AG04449 (cell line): ENCODE measurements at regions of chr18 and their contacts with region 1.

Region 1: DNA sequence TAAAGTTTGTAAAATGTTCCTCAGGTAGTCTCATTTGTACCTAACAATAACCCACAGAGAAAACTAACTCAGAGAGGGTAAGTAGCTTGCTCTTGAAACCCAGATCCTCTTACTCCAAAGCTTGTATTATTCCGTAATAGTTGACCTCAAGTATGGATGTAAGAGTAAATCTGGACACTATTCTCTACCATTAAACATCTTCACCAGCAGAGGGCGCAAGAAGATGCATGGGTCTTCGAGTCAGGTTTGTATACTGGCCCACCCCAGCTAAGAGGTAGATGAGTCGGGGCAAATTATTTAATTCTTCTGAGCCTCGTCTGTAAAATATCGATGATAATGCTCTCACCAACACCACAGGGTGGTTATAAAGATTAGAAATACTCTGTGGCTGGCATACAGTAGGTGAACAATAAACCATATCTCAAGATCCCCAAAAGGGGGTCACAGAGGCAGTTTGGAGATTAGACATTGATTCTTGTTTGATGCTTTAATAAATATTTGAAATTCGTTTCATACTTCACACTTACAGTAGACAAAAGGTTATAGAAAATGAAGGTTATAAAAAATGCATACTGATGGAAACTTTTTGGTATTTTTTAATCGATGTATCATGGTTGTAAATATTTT is 3.5 kb upstream of the CABLES1 start:
- DNase-seq: peak; percentile 37
- H3K4me3 ChIP-seq: no peak overlapping the region
- CTCF ChIP-seq: peak; percentile 67

Region 2: GRCh38 chr18:23032030-23032582 is 99.7 kb before region 1 on chr18:
- CTCF ChIA-PET with region 1: interaction called, 57 read pairs
- POLR2A ChIA-PET with region 1: interaction called, 3 read pairs
- DNase-seq: peak; percentile 65
- H3K4me3 ChIP-seq: no peak overlapping the region
- CTCF ChIP-seq: no peak

Region 3: GRCh38 chr18:23115683-23116096 is 16.1 kb before region 1 on chr18:
- CTCF ChIA-PET with region 1: interaction called, 61 read pairs
- POLR2A ChIA-PET with region 1: no interaction called
- DNase-seq: peak; percentile 89
- H3K4me3 ChIP-seq: no peak overlapping the region
- CTCF ChIP-seq: no peak

Region 4: DNA sequence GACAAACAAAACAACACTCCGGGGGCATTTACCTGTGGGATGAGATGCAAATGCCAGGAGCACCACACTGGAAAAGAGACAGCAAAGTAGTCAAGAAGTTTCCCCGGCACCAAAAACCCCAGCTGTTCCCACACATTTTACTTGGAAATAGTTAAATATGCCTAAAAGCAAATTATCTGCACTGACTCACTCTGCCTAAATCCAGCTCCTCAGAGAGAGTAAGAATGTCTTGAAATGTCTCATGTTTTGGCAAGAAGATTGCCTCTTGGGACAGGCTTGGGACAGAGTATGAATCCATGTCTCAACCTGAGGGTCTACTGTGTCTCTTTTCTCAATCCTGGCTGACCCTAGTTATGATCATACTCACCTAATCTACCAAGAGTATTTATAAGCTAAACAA is 233.8 kb after region 1 on chr18:
- CTCF ChIA-PET with region 1: interaction called, 12 read pairs
- POLR2A ChIA-PET with region 1: no interaction called
- DNase-seq: no peak
- H3K4me3 ChIP-seq: no peak overlapping the region
- CTCF ChIP-seq: no peak

Region 5: GRCh38 chr18:23401400-23402347 is 269.9 kb after region 1 on chr18:
- CTCF ChIA-PET with region 1: interaction called, 21 read pairs
- POLR2A ChIA-PET with region 1: no interaction called
- DNase-seq: no peak
- H3K4me3 ChIP-seq: no peak overlapping the region
- CTCF ChIP-seq: no peak

Region 6: GRCh38 chr18:24246143-24246542 is 1114.3 kb after region 1 on chr18:
- CTCF ChIA-PET with region 1: no interaction called
- POLR2A ChIA-PET with region 1: no interaction called
- DNase-seq: no peak
- H3K4me3 ChIP-seq: no peak overlapping the region
- CTCF ChIP-seq: no peak